Gastrocnemius medialis (tissue), 4 donors: ENCODE measurements at regions of chr2 and their contacts with region 1.

Region 1: DNA sequence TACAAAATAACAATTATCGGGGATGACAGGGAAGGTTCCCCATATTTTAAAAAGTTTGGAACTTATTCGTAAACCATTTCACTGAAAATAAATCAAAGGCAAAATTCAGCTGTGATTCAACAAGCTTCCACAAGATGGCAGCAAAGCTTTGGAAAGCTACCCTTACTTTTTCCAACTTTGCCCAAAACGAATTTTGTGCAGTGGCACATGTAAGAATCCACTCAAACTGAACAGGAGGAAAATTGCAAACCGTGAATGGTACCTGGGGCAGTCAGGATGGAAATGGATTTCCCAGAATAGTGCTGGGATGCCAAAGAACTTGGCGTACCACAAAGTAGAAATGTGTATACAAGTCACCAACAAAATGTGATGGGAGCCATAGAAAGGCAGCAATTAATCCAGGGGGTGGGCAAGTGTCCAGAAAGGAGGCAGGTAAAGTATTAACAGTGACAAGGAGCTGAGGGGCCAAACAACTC is 10.7 kb downstream of the RPL31 start:
- DNase-seq: no peak
- ATAC-seq: peak in 1 of 2 donors; percentile 28
- H3K4me3 ChIP-seq: no peak overlapping the region
- H3K27ac ChIP-seq: peak overlapping the region; percentile 26 to 50 (median 32)
- H3K4me1 ChIP-seq: peaks cover 9 to 21% of the 10 kb centered on the region in 2 donors
- H3K27me3 ChIP-seq: no peaks in the 10 kb centered on the region
- CTCF ChIP-seq: peak; percentile 78 to 88 (median 82)
- POLR2A ChIP-seq: no peak

Region 2: GRCh38 chr2:100984892-100985379 is 27.8 kb before region 1 on chr2:
- in situ Hi-C with region 1: no loop called
- intact Hi-C with region 1: loop called (anchors 1 kb)
- DNase-seq: peak; percentile 53 to 65
- ATAC-seq: peak; percentile 57 to 75
- H3K4me3 ChIP-seq: no peak overlapping the region
- H3K27ac ChIP-seq: no peak overlapping the region
- H3K4me1 ChIP-seq: no peaks in the 10 kb centered on the region
- H3K27me3 ChIP-seq: no peaks in the 10 kb centered on the region
- CTCF ChIP-seq: peak; percentile 82 to 91 (median 88)
- POLR2A ChIP-seq: no peak

Region 3: DNA sequence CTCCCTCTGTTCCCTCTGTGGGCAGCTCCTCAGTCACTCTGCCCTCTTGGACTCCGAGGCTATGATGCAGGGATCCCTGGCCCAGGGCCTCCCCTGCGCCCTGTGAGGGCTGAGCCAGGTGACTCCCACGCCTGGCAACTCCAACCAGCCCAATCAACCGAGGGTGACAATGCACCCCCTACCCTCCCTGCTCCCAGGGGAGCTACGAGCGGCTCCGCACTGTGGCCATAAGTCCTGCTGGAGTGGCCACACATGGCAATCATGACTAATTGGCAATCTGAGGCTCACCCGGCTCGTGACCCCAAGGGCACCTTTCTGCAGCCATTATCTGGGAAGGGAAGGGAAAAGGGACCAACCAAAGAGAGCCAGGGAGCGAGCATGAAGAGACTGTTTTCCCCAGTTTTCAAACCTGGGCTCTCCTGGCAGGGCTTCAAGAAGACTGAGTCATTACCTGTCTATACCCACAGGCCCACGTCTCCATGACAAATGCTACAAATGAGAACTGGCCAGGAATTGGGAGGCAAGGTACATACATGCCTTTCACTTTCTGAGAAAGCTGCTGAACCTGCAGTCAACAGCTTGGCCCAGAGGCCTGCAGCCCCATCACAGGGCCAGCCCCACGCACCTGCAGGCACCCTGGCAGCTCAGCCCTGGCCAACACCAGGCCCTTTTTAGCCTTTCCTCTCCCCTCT is 34.5 kb after region 1 on chr2:
- in situ Hi-C with region 1: no loop called
- intact Hi-C with region 1: loop called (anchors 5 kb)
- DNase-seq: peak; percentile 28 to 48
- ATAC-seq: peak; percentile 44 to 56
- H3K4me3 ChIP-seq: no peak overlapping the region
- H3K27ac ChIP-seq: peak overlapping the region; percentile 66 to 80 (median 72)
- H3K4me1 ChIP-seq: peaks cover 10 to 15% of the 10 kb centered on the region in 2 donors
- H3K27me3 ChIP-seq: no peaks in the 10 kb centered on the region
- CTCF ChIP-seq: no peak
- POLR2A ChIP-seq: no peak

Region 4: DNA sequence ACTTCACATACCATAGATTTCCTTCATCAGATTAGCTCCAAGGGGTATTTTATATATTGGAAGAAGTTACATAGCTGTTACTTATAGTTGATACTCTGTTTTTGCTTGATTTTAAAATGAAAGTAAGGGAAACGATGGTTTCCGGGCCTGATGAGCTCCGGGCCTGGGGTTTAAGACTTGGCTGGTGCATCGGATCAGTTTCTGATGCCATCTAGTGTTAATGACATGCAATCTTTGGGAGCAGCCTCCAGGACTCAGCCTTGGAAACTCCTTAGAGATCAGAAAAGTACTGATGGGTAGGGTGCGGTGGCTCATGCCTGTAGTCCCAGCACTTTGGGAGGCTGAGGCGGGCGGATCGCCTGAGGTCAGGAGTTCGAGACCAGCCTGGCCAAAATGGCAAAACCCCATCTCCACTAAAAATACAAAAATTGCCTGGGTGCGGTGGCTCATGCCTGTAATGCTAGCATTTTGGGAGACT is 192.8 kb after region 1 on chr2:
- in situ Hi-C with region 1: no loop called
- intact Hi-C with region 1: loop called (anchors 5 kb)
- DNase-seq: peak; percentile 24 to 38
- ATAC-seq: peak; percentile 88 to 91
- H3K4me3 ChIP-seq: peak overlapping the region; percentile 13 to 49 (median 29)
- H3K27ac ChIP-seq: no peak overlapping the region
- H3K4me1 ChIP-seq: peaks cover 0 to 3% of the 10 kb centered on the region in 2 donors
- H3K27me3 ChIP-seq: no peaks in the 10 kb centered on the region
- CTCF ChIP-seq: peak in 4 of 5 experiments; percentile 11 to 54 (median 43)
- POLR2A ChIP-seq: no peak